Lower lobe of right lung (tissue), 2 donors: ENCODE measurements at regions of chr11 and their contacts with region 1.

Region 1: DNA sequence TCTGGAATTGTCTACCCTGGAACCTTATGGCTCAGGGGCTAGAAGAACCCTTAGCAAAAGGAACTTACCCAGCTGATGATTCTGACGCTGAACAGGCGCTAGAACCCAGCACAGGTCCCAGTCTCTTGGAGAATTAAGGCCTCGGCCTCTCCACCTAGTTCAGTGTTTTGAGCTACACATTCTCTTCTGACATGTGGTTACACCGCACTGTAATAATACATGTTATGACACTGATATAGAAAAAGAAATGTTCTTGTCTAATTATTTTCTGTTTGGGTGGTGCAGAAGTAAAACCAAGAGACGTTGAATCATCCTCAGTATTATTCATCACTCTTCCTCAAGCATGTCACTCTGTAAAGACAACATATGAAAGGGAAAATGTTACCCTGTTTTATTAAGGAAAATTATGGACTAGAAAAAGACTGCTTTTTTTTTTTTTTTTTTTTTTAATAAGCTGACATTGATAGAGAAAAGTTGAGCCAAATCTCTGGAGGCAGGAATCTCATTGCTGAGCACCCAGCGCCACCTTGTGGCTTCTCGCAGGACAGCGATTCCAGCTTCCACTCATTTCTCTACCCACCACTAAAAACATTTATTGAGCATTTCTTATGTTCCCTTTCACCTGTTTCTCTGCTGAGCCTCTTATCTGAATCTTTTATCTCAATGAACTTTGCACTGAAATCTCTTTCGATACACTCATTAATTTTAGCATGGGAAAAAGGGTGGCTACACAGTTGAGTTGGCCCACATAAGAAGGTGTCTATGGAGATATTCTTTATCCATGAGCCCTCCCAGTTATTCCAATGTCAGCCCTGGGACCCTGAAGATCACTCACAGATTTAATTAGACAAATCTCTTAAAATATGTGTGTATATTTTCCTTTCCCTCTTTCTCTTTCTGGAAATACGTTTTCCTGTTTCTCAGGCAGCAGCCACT is 12.6 kb upstream of the APLNR start:
- DNase-seq: peak; percentile 68
- ATAC-seq: peak; percentile 79 to 83
- H3K4me3 ChIP-seq: no peak overlapping the region
- H3K27ac ChIP-seq: no peak overlapping the region
- H3K4me1 ChIP-seq: peaks cover 24% of the 10 kb centered on the region
- H3K27me3 ChIP-seq: no peaks in the 10 kb centered on the region
- CTCF ChIP-seq: peak; percentile 88

Region 2: DNA sequence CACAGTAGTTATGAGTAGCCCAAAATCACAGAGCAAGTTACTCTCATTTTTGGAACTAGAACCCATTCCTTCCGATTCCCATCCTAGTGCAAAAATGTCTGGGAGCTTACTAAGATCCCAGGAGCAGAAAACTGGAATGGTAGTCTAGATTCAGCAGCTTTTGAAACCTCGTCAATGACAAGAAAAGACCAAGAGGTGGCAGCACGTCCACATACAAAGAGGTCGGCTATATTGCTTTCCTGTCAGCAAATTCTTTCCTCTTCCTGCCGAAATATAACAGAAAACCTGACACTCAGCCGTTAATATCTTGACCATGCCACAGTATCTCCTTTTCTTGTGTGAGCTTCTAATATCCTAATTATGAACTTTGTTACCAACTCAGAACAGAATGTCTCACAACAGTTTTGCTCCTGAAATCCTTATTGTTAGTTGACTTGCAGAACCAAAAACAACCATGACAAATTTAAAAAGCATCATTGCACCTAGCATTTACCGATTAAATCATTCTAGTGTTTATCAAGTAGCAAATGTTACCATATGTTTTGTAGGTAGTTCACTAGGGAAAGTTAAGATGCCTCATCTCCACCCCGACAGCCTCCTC is 408.3 kb before region 1 on chr11:
- intact Hi-C with region 1: loop called (anchors 5 kb)
- DNase-seq: no peak
- ATAC-seq: peak in 1 of 2 donors; percentile 76
- H3K4me3 ChIP-seq: no peak overlapping the region
- H3K27ac ChIP-seq: no peak overlapping the region
- H3K4me1 ChIP-seq: peaks cover 18% of the 10 kb centered on the region
- H3K27me3 ChIP-seq: no peaks in the 10 kb centered on the region
- CTCF ChIP-seq: peak; percentile 71

Region 3: GRCh38 chr11:57124917-57125316 is 124.7 kb before region 1 on chr11:
- intact Hi-C with region 1: loop called (anchors 10 kb)
- DNase-seq: no peak
- ATAC-seq: no peak
- H3K4me3 ChIP-seq: no peak overlapping the region
- H3K27ac ChIP-seq: no peak overlapping the region
- H3K4me1 ChIP-seq: no peaks in the 10 kb centered on the region
- H3K27me3 ChIP-seq: no peaks in the 10 kb centered on the region
- CTCF ChIP-seq: no peak